Mammary epithelial cell (primary cell): ENCODE measurements at regions of chr1 and their contacts with region 1.

Region 1: GRCh38 chr1:153990468-153991150 is at the start of gene RPS27:
- DNase-seq: peak; percentile 95
- H3K4me3 ChIP-seq: peak within 1 kb of the TSS; percentile 75 to 78 (median 77)
- H3K27ac ChIP-seq: peak within 1 kb of the TSS; percentile 93
- H3K4me1 ChIP-seq: peaks cover 21% of the 10 kb centered on the region
- H3K27me3 ChIP-seq: no peaks in the 10 kb centered on the region
- CTCF ChIP-seq: no peak
- total RNA-seq, gene RPS27: 1,002 to 1,257 TPM

Region 2: GRCh38 chr1:153545067-153546055 is 445.2 kb before region 1 on chr1 and contains the start of gene S100A4:
- CTCF ChIA-PET with region 1: no interaction called
- dilution Hi-C with region 1: no loop called
- in situ Hi-C with region 1: loop called in 1 of 2 experiments (anchors 25 kb)
- intact Hi-C with region 1: no loop called
- DNase-seq: peak; percentile 92
- H3K4me3 ChIP-seq: no peak within 1 kb of the TSS
- H3K27ac ChIP-seq: peak within 1 kb of the TSS; percentile 53
- H3K4me1 ChIP-seq: peaks cover 70% of the 10 kb centered on the region
- H3K27me3 ChIP-seq: no peaks in the 10 kb centered on the region
- CTCF ChIP-seq: no peak
- total RNA-seq, gene S100A4: 4.3 to 9.9 TPM

Region 3: DNA sequence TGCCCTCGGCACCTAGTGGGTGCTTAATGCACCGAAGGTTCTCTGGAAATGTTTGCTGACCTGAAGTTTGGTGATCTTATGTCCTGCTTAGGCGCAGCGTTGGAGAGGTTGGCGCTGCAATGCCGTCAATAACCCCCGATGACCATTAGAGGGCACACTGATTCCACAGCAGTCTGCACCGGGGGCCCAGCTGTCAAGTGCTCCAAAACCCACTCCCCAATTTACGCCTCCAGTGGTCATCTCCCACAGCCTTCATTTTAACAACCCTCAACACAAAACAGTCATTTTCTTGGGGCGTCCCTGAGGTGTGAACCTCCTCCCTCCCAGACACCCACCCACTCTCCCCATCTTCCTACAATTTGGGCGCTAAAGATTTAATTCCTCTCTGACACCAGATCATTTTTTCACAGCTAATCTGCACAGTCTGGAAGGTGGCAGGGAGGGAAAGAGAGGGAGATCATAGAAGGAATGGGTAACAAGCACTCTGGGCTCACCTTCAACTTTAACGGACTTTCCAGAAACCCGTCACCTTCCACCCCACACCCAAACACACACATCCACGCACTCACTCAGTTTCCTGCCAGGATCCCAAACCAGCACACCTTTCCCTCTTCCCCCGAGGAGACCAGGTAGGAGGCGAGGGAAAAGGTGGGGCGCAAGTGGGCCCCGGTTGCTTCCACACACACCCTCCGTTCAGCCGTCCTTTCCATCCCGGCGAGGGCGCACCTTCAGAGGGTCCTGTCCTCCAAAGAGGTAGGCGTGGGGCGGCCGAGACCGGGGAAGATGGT is 312.7 kb before region 1 on chr1:
- CTCF ChIA-PET with region 1: no interaction called
- dilution Hi-C with region 1: no loop called
- in situ Hi-C with region 1: no loop called
- intact Hi-C with region 1: loop called (anchors 1 kb)
- DNase-seq: peak; percentile 29
- H3K4me3 ChIP-seq: peak overlapping the region; percentile 25 to 42 (median 30)
- H3K27ac ChIP-seq: no peak overlapping the region
- H3K4me1 ChIP-seq: peaks cover 19% of the 10 kb centered on the region
- H3K27me3 ChIP-seq: peaks cover 22% of the 10 kb centered on the region
- CTCF ChIP-seq: peak; percentile 91 to 95

Region 4: GRCh38 chr1:153796791-153797659 is 193.6 kb before region 1 on chr1:
- CTCF ChIA-PET with region 1: no interaction called
- dilution Hi-C with region 1: no loop called
- in situ Hi-C with region 1: loop called (anchors 5 to 10 kb)
- intact Hi-C with region 1: loop called (anchors 1 kb)
- DNase-seq: peak; percentile 59
- H3K4me3 ChIP-seq: no peak overlapping the region
- H3K27ac ChIP-seq: no peak overlapping the region
- H3K4me1 ChIP-seq: no peaks in the 10 kb centered on the region
- H3K27me3 ChIP-seq: no peaks in the 10 kb centered on the region
- CTCF ChIP-seq: peak; percentile 88 to 90

Region 5: DNA sequence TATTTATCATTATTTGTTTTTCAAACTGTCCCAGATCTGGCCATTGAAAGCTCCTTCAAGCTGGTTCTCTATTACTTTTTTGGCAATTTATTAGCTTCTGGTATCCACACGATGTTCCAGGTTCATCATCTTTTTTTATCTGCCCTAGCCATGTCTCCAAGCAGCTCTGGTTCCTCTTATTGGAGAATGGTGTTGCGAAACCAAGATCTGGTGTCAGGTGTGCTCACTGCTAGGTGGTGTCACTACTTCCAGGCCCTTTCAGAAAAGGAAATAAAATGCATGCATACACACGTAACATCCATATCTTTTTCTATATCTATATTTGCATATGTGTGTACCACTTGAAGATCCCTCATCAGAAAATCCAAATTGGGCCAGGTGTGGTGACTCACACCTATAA is 121.1 kb before region 1 on chr1:
- CTCF ChIA-PET with region 1: no interaction called
- dilution Hi-C with region 1: no loop called
- in situ Hi-C with region 1: no loop called
- intact Hi-C with region 1: no loop called
- DNase-seq: no peak
- H3K4me3 ChIP-seq: no peak overlapping the region
- H3K27ac ChIP-seq: no peak overlapping the region
- H3K4me1 ChIP-seq: no peaks in the 10 kb centered on the region
- H3K27me3 ChIP-seq: no peaks in the 10 kb centered on the region
- CTCF ChIP-seq: no peak

Region 6: GRCh38 chr1:153922972-153923925 is 67.4 kb before region 1 on chr1 and contains the start of gene GATAD2B:
- CTCF ChIA-PET with region 1: interaction called, 4 read pairs
- dilution Hi-C with region 1: no loop called
- in situ Hi-C with region 1: no loop called
- intact Hi-C with region 1: loop called (anchors 1 kb)
- DNase-seq: peak; percentile 100
- H3K4me3 ChIP-seq: peak within 1 kb of the TSS; percentile 88 to 93 (median 89)
- H3K27ac ChIP-seq: peak within 1 kb of the TSS; percentile 82
- H3K4me1 ChIP-seq: peaks cover 26% of the 10 kb centered on the region
- H3K27me3 ChIP-seq: no peaks in the 10 kb centered on the region
- CTCF ChIP-seq: no peak
- total RNA-seq, gene GATAD2B: 13.7 to 52.7 TPM

Region 7: DNA sequence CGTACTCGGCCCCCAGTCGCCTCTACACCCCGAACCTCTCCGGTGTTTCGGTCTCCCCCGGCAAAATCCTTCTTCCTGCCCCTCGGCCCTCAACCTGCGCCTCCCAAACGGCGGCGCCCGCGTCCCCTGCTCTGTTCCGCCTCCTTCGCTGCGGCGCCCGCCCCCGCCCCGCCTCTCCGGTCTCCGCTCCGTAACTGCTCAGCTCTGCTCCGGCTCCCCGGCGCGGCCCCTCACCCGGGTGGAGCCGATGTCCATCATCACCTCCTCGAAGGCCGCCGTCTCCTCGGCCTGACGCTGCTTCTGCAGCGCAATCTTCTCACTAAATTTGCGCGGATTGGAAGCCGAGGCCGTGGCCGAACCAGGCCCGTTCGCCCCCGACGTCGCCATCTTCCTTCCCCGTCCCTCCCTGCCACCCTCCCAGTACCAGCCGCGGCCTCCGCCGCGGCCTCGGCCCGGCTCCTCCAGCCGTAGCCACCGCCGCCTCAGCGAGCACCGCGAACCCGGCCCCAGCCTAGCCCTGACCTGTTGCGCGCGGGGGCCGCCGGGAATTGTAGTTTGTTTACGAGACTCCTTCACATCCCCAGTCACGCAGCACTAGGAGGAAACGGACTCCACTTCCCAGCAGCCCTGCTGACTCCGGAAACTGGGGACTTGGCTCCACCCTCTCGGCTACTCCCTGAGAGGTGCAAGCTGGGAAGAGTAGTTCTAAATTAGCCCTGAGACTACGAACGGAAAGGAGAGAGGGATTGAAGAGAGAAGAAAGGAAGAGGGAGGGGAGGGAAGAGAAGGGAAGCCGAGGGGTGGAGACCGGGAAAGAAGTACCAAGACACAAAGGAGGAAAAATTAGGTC is 32.3 kb before region 1 on chr1 and contains the start of gene CRTC2:
- CTCF ChIA-PET with region 1: no interaction called
- dilution Hi-C with region 1: no loop called
- in situ Hi-C with region 1: no loop called
- intact Hi-C with region 1: loop called (anchors 2 kb)
- DNase-seq: peak; percentile 97
- H3K4me3 ChIP-seq: peak within 1 kb of the TSS; percentile 76 to 92 (median 87)
- H3K27ac ChIP-seq: peak within 1 kb of the TSS; percentile 75
- H3K4me1 ChIP-seq: peaks cover 30% of the 10 kb centered on the region
- H3K27me3 ChIP-seq: no peaks in the 10 kb centered on the region
- CTCF ChIP-seq: no peak
- total RNA-seq, gene CRTC2: 6.0 to 31.7 TPM

Region 8: GRCh38 chr1:154141240-154141639 is 150.6 kb after region 1 on chr1:
- CTCF ChIA-PET with region 1: no interaction called
- dilution Hi-C with region 1: no loop called
- in situ Hi-C with region 1: no loop called
- intact Hi-C with region 1: no loop called
- DNase-seq: no peak
- H3K4me3 ChIP-seq: no peak overlapping the region
- H3K27ac ChIP-seq: no peak overlapping the region
- H3K4me1 ChIP-seq: no peaks in the 10 kb centered on the region
- H3K27me3 ChIP-seq: no peaks in the 10 kb centered on the region
- CTCF ChIP-seq: no peak

Region 9: DNA sequence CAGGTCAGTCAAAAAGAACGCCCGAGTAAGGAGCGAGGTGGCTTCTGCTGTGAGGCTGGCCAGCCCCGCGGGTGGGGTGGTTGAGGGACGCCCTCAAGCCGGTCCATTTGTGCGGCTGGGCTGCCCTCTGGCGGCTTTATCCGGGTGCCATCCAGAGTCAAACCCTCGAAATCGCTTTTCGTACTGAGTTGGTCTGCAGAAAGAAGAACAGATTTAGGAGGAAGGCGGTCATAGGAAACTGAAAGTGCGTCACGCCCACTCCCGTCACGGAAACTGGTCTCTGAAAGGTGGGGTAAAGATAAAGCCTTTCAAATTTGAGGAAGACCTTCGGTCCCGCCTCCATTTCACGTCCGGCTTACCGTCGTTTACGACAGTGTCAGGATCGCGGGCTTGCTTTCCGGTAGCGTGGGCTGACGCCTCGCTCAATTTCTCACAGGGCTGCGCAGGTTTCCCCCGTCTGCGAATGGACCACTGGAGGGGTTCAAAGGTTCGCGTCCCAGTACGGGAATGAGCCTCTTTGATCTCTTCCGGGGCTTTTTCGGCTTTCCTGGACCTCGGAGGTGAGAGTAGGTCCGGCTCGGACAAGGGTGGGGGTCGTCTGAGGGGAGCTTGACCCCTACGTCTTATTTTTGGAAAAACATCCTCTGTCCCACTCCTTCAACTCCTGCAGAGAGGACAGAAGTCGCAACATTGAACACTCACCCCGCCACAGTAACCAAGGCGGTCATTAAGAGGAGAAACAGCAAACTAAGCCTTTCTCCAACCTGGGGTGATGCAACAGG is 281.8 kb after region 1 on chr1 and contains the start of gene HAX1:
- CTCF ChIA-PET with region 1: no interaction called
- dilution Hi-C with region 1: no loop called
- in situ Hi-C with region 1: no loop called
- intact Hi-C with region 1: loop called (anchors 1 kb)
- DNase-seq: peak; percentile 96
- H3K4me3 ChIP-seq: peak within 1 kb of the TSS; percentile 72 to 96 (median 95)
- H3K27ac ChIP-seq: peak within 1 kb of the TSS; percentile 76
- H3K4me1 ChIP-seq: peaks cover 4% of the 10 kb centered on the region
- H3K27me3 ChIP-seq: no peaks in the 10 kb centered on the region
- CTCF ChIP-seq: peak; percentile 61 to 82
- total RNA-seq, gene HAX1: 135 to 174 TPM

Region 10: DNA sequence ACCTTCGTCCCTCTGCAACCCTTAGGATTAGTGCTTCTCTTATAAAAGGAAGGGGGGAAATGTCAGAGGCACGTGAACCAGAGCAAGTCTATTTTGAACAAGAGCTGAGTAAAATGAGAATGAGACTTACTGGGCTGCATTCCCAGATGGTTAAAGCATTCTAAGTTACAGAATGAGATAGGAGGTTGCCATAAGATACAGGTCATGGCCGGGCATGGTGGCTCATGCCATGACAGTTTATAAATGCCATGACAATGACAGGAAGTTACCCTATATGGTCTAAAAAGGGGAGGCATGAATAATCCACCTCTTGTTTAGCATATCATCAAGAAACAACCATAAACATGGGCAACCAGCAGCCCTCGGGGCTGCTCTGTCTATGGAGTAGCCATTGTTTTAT is 327.8 kb after region 1 on chr1:
- CTCF ChIA-PET with region 1: no interaction called
- dilution Hi-C with region 1: no loop called
- in situ Hi-C with region 1: no loop called
- intact Hi-C with region 1: no loop called
- DNase-seq: no peak
- H3K4me3 ChIP-seq: no peak overlapping the region
- H3K27ac ChIP-seq: no peak overlapping the region
- H3K4me1 ChIP-seq: no peaks in the 10 kb centered on the region
- H3K27me3 ChIP-seq: no peaks in the 10 kb centered on the region
- CTCF ChIP-seq: no peak